Breast epithelium (tissue), 4 donors: ENCODE measurements at regions of chr5 and their contacts with region 1.

Region 1: DNA sequence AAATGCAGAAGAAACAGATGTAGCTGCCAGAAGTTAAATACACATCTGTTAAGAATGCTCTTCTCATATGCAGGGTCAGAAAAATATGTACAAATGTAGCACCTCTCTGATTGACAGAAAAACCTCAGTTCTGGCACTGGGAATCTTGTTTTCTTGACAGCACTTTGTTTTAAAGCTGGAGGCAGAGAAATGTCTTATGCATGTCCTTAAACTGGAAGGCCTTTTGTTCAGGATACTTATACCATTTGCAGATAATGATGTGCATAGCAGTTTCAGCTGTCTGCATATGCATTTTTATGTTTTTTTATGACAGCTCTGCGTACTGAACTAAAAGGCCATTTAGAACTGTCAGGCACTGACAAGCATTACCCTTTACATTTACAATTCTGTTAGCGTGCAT is 567.9 kb downstream of the EBF1 start:
- DNase-seq: no peak
- H3K4me3 ChIP-seq: no peak overlapping the region
- H3K27ac ChIP-seq: no peak overlapping the region
- H3K4me1 ChIP-seq: no peaks in the 10 kb centered on the region
- H3K27me3 ChIP-seq: no peaks in the 10 kb centered on the region
- CTCF ChIP-seq: no peak
- POLR2A ChIP-seq: no peak

Region 2: GRCh38 chr5:157842787-157843186 is 689.1 kb before region 1 on chr5:
- intact Hi-C with region 1: no loop called
- DNase-seq: no peak
- H3K4me3 ChIP-seq: no peak overlapping the region
- H3K27ac ChIP-seq: no peak overlapping the region
- H3K4me1 ChIP-seq: no peaks in the 10 kb centered on the region
- H3K27me3 ChIP-seq: no peaks in the 10 kb centered on the region
- CTCF ChIP-seq: no peak
- POLR2A ChIP-seq: no peak

Region 3: DNA sequence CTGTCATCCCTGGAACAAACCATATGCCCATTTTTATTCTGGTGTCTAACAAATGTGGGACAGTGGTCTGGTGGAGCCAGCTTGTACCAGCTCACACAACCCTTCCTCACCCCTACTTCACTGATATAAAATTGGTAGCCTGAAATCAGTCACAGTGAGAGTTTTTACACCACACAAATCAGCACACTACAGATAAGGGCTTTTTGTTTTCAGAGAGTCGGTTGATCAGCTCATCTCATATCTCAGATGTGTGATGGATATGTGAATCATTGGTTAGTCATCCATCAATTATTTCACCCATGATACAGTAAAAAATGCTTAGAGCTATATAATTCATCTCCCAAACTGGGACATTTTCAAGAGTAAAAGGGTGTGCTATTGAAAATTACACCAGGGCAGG is 38.6 kb after region 1 on chr5:
- intact Hi-C with region 1: loop called (anchors 2 kb)
- DNase-seq: no peak
- H3K4me3 ChIP-seq: no peak overlapping the region
- H3K27ac ChIP-seq: no peak overlapping the region
- H3K4me1 ChIP-seq: no peaks in the 10 kb centered on the region
- H3K27me3 ChIP-seq: no peaks in the 10 kb centered on the region
- CTCF ChIP-seq: no peak
- POLR2A ChIP-seq: no peak